ENCODE measurements at regions of chrX and their contacts with region 1.

Region 1: GRCh38 chrX:19332983-19333382 is 10.7 kb upstream of the PDHA1 start:
- DNase-seq: no peak
- H3K4me3 ChIP-seq: no peak overlapping the region
- H3K27ac ChIP-seq: no peak overlapping the region
- H3K4me1 ChIP-seq: no peaks in the 10 kb centered on the region
- H3K27me3 ChIP-seq: no peaks in the 10 kb centered on the region

Region 2: GRCh38 chrX:18935893-18936292 is 397.1 kb before region 1 on chrX:
- CTCF ChIA-PET with region 1: interaction called, 16 read pairs
- POLR2A ChIA-PET with region 1: no interaction called
- DNase-seq: no peak
- H3K4me3 ChIP-seq: no peak overlapping the region
- H3K27ac ChIP-seq: no peak overlapping the region
- H3K4me1 ChIP-seq: peaks cover 0 to 3% (median 0%) of the 10 kb centered on the region in 4 experiments
- H3K27me3 ChIP-seq: peaks cover 0 to 4% (median 0%) of the 10 kb centered on the region in 5 experiments

Measured in common myeloid progenitor, CD34-positive (primary cell).